Naive thymus-derived CD4-positive, alpha-beta T cell (primary cell): ENCODE measurements at regions of chr3 and their contacts with region 1.

Region 1: GRCh38 chr3:186930641-186931531 is 560 bp downstream of the ST6GAL1 start:
- DNase-seq: peak; percentile 39 to 78 (median 75)
- ATAC-seq: peak; percentile 87
- H3K4me3 ChIP-seq: peak overlapping the region; percentile 79
- H3K4me3 Mint-ChIP-seq: peak overlapping the region; percentile 89 to 100 (median 98)
- H3K27ac ChIP-seq: peak overlapping the region; percentile 74
- H3K27ac Mint-ChIP-seq: peak overlapping the region; percentile 88 to 98 (median 95)
- H3K4me1 ChIP-seq: peaks cover 8 to 20% of the 10 kb centered on the region in 2 donors
- H3K4me1 Mint-ChIP-seq: peaks cover 30 to 47% (median 40%) of the 10 kb centered on the region in 7 donors
- H3K27me3 ChIP-seq: no peaks in the 10 kb centered on the region
- H3K27me3 Mint-ChIP-seq: no peaks in the 10 kb centered on the region

Region 2: GRCh38 chr3:186570096-186570940 is 360.6 kb before region 1 on chr3 and contains the start of gene DNAJB11:
- CTCF ChIA-PET with region 1: no interaction called
- POLR2A ChIA-PET with region 1: no interaction called
- intact Hi-C with region 1: loop called in 1 of 2 experiments (anchors 1 kb)
- DNase-seq: peak; percentile 83 to 100 (median 99)
- ATAC-seq: peak; percentile 91
- H3K4me3 ChIP-seq: peak within 1 kb of the TSS; percentile 85
- H3K4me3 Mint-ChIP-seq: peak within 1 kb of the TSS; percentile 83 to 98 (median 95)
- H3K27ac ChIP-seq: peak within 1 kb of the TSS; percentile 95
- H3K27ac Mint-ChIP-seq: peak within 1 kb of the TSS; percentile 85 to 99 (median 98)
- H3K4me1 ChIP-seq: peaks cover 25 to 33% of the 10 kb centered on the region in 2 donors
- H3K4me1 Mint-ChIP-seq: peaks cover 20 to 70% (median 66%) of the 10 kb centered on the region in 7 donors
- H3K27me3 ChIP-seq: no peaks in the 10 kb centered on the region
- H3K27me3 Mint-ChIP-seq: peaks cover 0 to 4% (median 0%) of the 10 kb centered on the region in 5 donors
- total RNA-seq, gene DNAJB11: 29.9 to 75.2 (median 63.1) TPM

Region 3: DNA sequence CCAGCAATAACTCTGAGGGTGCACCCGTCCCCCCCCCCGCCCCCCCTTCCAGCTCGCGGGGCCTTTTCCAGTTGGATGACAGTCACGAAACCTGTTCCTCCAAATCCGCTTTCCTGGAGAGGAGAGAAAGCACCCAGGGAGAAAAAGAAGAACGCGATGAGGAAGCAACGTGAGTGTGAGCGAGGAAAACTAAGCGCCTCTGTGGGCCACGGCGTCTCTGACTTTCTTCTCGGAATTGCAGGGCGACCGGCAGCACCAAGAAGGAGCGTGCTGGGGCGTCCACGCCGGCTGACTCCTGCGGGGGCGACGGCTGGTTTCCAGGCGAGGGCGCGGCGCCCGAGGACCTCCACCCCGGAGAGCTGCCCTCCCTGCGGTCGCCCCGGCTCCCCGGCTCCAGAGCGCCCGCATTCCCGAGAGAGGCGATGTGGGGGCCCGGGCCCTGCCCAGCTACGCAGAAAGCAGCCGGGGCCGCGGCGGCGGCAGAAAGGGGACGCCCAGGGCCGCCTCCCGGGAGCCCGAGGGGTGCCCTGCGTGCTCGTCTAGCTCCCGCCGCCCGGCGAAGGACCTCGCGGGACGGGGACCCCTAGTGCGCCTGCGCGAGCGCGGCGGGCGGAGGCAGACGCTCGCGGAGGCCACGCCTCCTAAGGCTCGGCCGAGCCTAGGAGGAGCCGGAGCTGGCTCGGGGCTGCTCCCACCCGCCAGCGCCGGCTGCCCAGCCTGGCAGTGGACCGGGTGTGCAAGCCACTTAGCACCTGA is 103.7 kb before region 1 on chr3:
- CTCF ChIA-PET with region 1: no interaction called
- POLR2A ChIA-PET with region 1: interaction called, 6 read pairs
- intact Hi-C with region 1: loop called (anchors 1 kb)
- DNase-seq: peak; percentile 79 to 92 (median 87)
- ATAC-seq: peak; percentile 96
- H3K4me3 ChIP-seq: peak overlapping the region; percentile 66
- H3K4me3 Mint-ChIP-seq: peak overlapping the region; percentile 53 to 91 (median 80)
- H3K27ac ChIP-seq: peak overlapping the region; percentile 52
- H3K27ac Mint-ChIP-seq: peak overlapping the region in 2 of 9 donors; percentile 18 to 19
- H3K4me1 ChIP-seq: peaks cover 6 to 21% of the 10 kb centered on the region in 2 donors
- H3K4me1 Mint-ChIP-seq: peaks cover 15 to 24% (median 20%) of the 10 kb centered on the region in 7 donors
- H3K27me3 ChIP-seq: peaks cover 0 to 22% of the 10 kb centered on the region in 2 donors
- H3K27me3 Mint-ChIP-seq: peaks cover 45 to 61% (median 52%) of the 10 kb centered on the region in 5 donors

Region 4: DNA sequence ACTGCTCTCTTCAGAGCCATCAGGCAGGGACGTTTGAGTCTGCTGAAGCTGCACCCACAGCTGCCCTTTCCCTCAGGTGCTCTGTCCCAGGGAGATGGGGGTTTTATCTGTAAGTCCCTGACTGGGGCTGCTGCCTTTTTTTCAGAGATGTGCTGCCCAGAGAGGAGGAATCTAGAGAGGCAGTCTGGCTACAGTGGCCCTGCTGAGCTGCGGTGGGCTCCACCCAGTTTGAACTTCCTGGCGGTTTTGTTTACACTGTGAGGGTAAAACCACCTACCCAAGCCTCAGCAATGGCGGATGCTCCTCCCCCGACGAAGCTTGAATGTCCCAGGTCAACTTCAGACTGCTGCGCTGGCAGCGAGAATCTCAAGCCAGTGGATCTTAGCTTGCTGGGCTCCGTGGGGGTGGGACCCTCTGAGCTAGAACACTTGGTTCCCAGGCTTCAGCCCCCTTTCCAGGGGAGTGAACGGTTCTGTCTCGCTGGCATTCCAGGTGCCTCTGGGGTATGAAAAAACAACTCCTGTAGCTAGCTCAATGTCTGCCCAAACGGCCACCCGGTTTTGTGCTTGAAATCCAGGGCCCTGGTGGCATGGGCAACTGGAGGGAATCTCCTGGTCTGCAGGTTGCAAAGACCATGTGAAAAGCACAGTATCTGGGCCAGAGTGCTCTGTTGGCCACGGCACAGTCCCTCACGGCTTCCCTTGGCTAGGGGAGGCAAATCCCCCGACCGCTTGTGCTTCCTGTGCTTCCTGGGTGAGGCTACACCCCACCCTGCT is 21.6 kb before region 1 on chr3:
- CTCF ChIA-PET with region 1: interaction called, 10 read pairs
- POLR2A ChIA-PET with region 1: interaction called, 74 read pairs
- intact Hi-C with region 1: loop called (anchors 1 kb)
- DNase-seq: peak; percentile 40 to 86 (median 78)
- ATAC-seq: peak; percentile 86
- H3K4me3 ChIP-seq: peak overlapping the region; percentile 48
- H3K4me3 Mint-ChIP-seq: peak overlapping the region; percentile 61 to 78 (median 72)
- H3K27ac ChIP-seq: peak overlapping the region; percentile 66
- H3K27ac Mint-ChIP-seq: peak overlapping the region; percentile 88 to 94 (median 91)
- H3K4me1 ChIP-seq: peaks cover 17 to 18% of the 10 kb centered on the region in 2 donors
- H3K4me1 Mint-ChIP-seq: peaks cover 17 to 48% (median 37%) of the 10 kb centered on the region in 7 donors
- H3K27me3 ChIP-seq: no peaks in the 10 kb centered on the region
- H3K27me3 Mint-ChIP-seq: no peaks in the 10 kb centered on the region

Region 5: GRCh38 chr3:187025656-187026316 is 94.9 kb after region 1 on chr3:
- CTCF ChIA-PET with region 1: interaction called, 7 read pairs
- POLR2A ChIA-PET with region 1: interaction called, 70 read pairs
- intact Hi-C with region 1: loop called (anchors 1 kb)
- DNase-seq: peak in 4 of 9 donors; percentile 35 to 45 (median 41)
- ATAC-seq: peak; percentile 17
- H3K4me3 ChIP-seq: peak overlapping the region; percentile 68
- H3K4me3 Mint-ChIP-seq: peak overlapping the region; percentile 88 to 97 (median 93)
- H3K27ac ChIP-seq: peak overlapping the region; percentile 78
- H3K27ac Mint-ChIP-seq: peak overlapping the region; percentile 86 to 99 (median 92)
- H3K4me1 ChIP-seq: peaks cover 31 to 45% of the 10 kb centered on the region in 2 donors
- H3K4me1 Mint-ChIP-seq: peaks cover 40 to 73% (median 61%) of the 10 kb centered on the region in 7 donors
- H3K27me3 ChIP-seq: no peaks in the 10 kb centered on the region
- H3K27me3 Mint-ChIP-seq: no peaks in the 10 kb centered on the region

Region 6: GRCh38 chr3:187139126-187139894 is 208.4 kb after region 1 on chr3 and contains the start of gene RPL39L:
- CTCF ChIA-PET with region 1: no interaction called
- POLR2A ChIA-PET with region 1: interaction called, 5 read pairs
- intact Hi-C with region 1: loop called (anchors 1 to 2 kb)
- DNase-seq: peak; percentile 87 to 95 (median 92)
- ATAC-seq: peak; percentile 97
- H3K4me3 ChIP-seq: peak within 1 kb of the TSS; percentile 94
- H3K4me3 Mint-ChIP-seq: peak within 1 kb of the TSS; percentile 80 to 94 (median 89)
- H3K27ac ChIP-seq: peak within 1 kb of the TSS; percentile 76
- H3K27ac Mint-ChIP-seq: peak within 1 kb of the TSS; percentile 86 to 98 (median 94)
- H3K4me1 ChIP-seq: peaks cover 9 to 17% of the 10 kb centered on the region in 2 donors
- H3K4me1 Mint-ChIP-seq: peaks cover 6 to 26% (median 17%) of the 10 kb centered on the region in 7 donors
- H3K27me3 ChIP-seq: no peaks in the 10 kb centered on the region
- H3K27me3 Mint-ChIP-seq: peaks cover 0 to 2% (median 0%) of the 10 kb centered on the region in 5 donors
- total RNA-seq, gene RPL39L: 0.81 to 14.0 (median 2.8) TPM in 4 of 5 experiments, not detected in the other

Region 7: GRCh38 chr3:188365978-188366698 is 1435.3 kb after region 1 on chr3:
- CTCF ChIA-PET with region 1: no interaction called
- POLR2A ChIA-PET with region 1: no interaction called
- intact Hi-C with region 1: no loop called
- DNase-seq: no peak
- ATAC-seq: no peak
- H3K4me3 ChIP-seq: no peak overlapping the region
- H3K4me3 Mint-ChIP-seq: no peak overlapping the region
- H3K27ac ChIP-seq: no peak overlapping the region
- H3K27ac Mint-ChIP-seq: no peak overlapping the region
- H3K4me1 ChIP-seq: peaks cover 6 to 9% of the 10 kb centered on the region in 2 donors
- H3K4me1 Mint-ChIP-seq: peaks cover 6 to 44% (median 31%) of the 10 kb centered on the region in 7 donors
- H3K27me3 ChIP-seq: no peaks in the 10 kb centered on the region
- H3K27me3 Mint-ChIP-seq: no peaks in the 10 kb centered on the region